ENCODE measurements at regions of chr1 and their contacts with region 1.

Region 1: DNA sequence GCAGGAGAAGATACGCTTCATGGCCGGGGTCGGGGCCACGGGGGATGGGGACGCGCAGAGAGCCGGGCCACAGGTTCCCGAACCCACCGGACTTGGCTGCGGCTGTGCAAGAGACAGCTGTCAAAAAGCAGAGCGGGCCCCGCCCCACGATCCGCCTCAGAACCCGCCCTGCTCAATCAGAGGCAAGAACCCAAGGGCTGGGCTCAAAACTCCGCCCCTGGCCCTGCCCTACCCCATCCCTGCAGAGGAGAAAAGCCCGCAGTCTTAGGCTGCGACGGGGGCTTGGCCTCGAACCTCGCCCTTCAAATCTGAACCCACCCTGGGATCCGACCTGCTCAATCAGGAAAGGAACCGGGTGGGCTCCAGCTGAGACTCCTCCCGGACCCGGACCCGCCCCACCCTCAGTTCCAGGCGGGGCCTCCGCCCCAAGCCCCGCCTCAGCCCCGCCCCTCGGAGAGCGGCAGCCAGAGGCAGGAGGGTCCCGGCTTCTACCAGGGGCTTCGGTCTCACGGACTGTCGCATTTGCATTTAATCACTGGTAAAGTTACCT is at the start of gene ANKRD35:
- DNase-seq: peak; percentile 80 to 87
- H3K4me3 ChIP-seq: peak within 1 kb of the TSS; percentile 70
- H3K4me3 Mint-ChIP-seq: peak within 1 kb of the TSS; percentile 76
- H3K27ac Mint-ChIP-seq: no peak within 1 kb of the TSS
- H3K4me1 ChIP-seq: peaks cover 8% of the 10 kb centered on the region
- H3K4me1 Mint-ChIP-seq: peaks cover 10% of the 10 kb centered on the region
- H3K27me3 ChIP-seq: 0 out of 2 replicates have a peak, but pooled peaks cover 2% of the 10 kb centered on the region
- H3K27me3 Mint-ChIP-seq: peaks cover 17% of the 10 kb centered on the region
- CTCF ChIP-seq: no peak
- total RNA-seq, gene ANKRD35: 0.09 and 0.34 TPM in 2 replicates

Region 2: GRCh38 chr1:145858894-145859490 is 26.8 kb before region 1 on chr1 and contains the start of gene PIAS3:
- CTCF ChIA-PET with region 1: interaction called, 4 read pairs
- POLR2A ChIA-PET with region 1: interaction called, 5 read pairs
- intact Hi-C with region 1: loop called (anchors 2 kb)
- DNase-seq: peak; percentile 96 to 97
- H3K4me3 ChIP-seq: peak within 1 kb of the TSS; percentile 85
- H3K4me3 Mint-ChIP-seq: peak within 1 kb of the TSS; percentile 92
- H3K27ac Mint-ChIP-seq: peak within 1 kb of the TSS; percentile 78
- H3K4me1 ChIP-seq: peaks cover 3% of the 10 kb centered on the region; the same call in 1 of the 2 replicates
- H3K4me1 Mint-ChIP-seq: peaks cover 7% of the 10 kb centered on the region
- H3K27me3 ChIP-seq: no peaks in the 10 kb centered on the region
- H3K27me3 Mint-ChIP-seq: no peaks in the 10 kb centered on the region
- CTCF ChIP-seq: no peak
- total RNA-seq, gene PIAS3: 20.3 and 22.0 TPM in 2 replicates

Region 3: GRCh38 chr1:145918144-145918992 is 32.6 kb after region 1 on chr1 and contains the start of gene PEX11B:
- CTCF ChIA-PET with region 1: no interaction called
- POLR2A ChIA-PET with region 1: no interaction called
- intact Hi-C with region 1: no loop called
- DNase-seq: peak; percentile 83 to 88
- H3K4me3 ChIP-seq: peak within 1 kb of the TSS; percentile 76
- H3K4me3 Mint-ChIP-seq: peak within 1 kb of the TSS; percentile 94
- H3K27ac Mint-ChIP-seq: peak within 1 kb of the TSS; percentile 79
- H3K4me1 ChIP-seq: no peaks in the 10 kb centered on the region
- H3K4me1 Mint-ChIP-seq: peaks cover 7% of the 10 kb centered on the region
- H3K27me3 ChIP-seq: no peaks in the 10 kb centered on the region
- H3K27me3 Mint-ChIP-seq: no peaks in the 10 kb centered on the region
- CTCF ChIP-seq: no peak
- total RNA-seq, gene PEX11B: 14.5 and 16.1 TPM in 2 replicates

Region 4: GRCh38 chr1:146029117-146029516 is 143.3 kb after region 1 on chr1:
- CTCF ChIA-PET with region 1: no interaction called
- POLR2A ChIA-PET with region 1: no interaction called
- intact Hi-C with region 1: no loop called
- DNase-seq: no peak
- H3K4me3 ChIP-seq: no peak overlapping the region
- H3K4me3 Mint-ChIP-seq: no peak overlapping the region
- H3K27ac Mint-ChIP-seq: no peak overlapping the region
- H3K4me1 ChIP-seq: no peaks in the 10 kb centered on the region
- H3K4me1 Mint-ChIP-seq: peaks cover 6% of the 10 kb centered on the region
- H3K27me3 ChIP-seq: no peaks in the 10 kb centered on the region
- H3K27me3 Mint-ChIP-seq: peaks cover 3% of the 10 kb centered on the region
- CTCF ChIP-seq: no peak

Measured in Caco-2 (cell line).